ENCODE measurements at regions of chr2 and their contacts with region 1.

Region 1: GRCh38 chr2:46461011-46461674 is 18.2 kb upstream of the TMEM247 start:
- DNase-seq: peak; percentile 90

Region 2: DNA sequence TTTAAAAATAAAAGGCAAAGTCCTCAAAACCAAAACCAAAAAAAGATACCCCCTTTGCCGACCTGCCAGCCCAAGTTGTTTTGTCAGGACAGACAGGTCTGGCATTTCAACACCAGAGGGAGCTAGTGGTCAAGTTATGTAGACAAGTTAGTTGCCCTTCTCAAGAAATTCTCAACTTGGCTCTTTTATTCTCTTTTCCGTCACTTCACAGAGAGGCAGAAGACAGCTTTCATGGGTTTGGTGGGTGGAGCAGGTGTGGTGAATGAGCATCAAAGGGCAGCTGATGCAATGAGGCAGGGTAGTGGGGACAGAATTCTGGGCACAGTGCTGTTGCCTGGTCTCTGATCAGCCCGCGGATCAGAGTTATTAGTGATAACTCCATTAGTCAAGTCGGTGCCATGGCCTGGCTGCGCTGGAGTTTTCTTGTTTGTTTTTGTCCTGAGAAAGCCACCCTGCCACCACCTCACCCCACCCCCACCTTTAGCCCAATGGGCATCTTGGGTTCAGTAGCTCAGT is 467.6 kb before region 1 on chr2:
- intact Hi-C with region 1: loop called (anchors 2 kb)
- DNase-seq: peak; percentile 57